MCF 10A (cell line): ENCODE measurements at regions of chr13 and their contacts with region 1.

Region 1: DNA sequence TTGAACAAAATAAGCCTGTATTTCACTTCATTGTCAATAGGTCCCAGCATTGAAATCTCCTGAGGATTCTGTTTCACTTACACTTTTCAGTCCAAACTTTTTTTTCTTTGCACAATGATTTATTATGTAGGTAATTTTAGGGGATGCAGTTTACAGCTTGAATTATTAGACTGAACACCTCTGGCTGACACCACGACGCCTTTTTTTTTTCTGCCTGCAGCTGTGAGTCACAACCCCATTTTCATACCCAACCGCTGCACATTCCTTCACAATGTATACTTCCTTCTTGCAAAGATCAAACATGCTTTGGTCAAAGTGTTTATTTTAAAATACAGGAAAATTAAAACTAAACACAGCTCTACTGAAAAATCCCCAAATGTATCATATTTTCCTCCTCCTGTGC is 11.4 kb downstream of the ZIC2 start:
- DNase-seq: peak; percentile 61
- H3K4me3 Mint-ChIP-seq: no peak overlapping the region
- H3K27ac Mint-ChIP-seq: no peak overlapping the region
- H3K4me1 Mint-ChIP-seq: peaks cover 13% of the 10 kb centered on the region
- H3K27me3 Mint-ChIP-seq: peaks cover 38% of the 10 kb centered on the region
- CTCF ChIP-seq: no peak

Region 2: GRCh38 chr13:99980201-99980823 is 12.6 kb before region 1 on chr13:
- CTCF ChIA-PET with region 1: no interaction called
- POLR2A ChIA-PET with region 1: interaction called, 16 read pairs
- intact Hi-C with region 1: no loop called
- DNase-seq: peak; percentile 81
- H3K4me3 Mint-ChIP-seq: peak overlapping the region; percentile 73
- H3K27ac Mint-ChIP-seq: no peak overlapping the region
- H3K4me1 Mint-ChIP-seq: peaks cover 4% of the 10 kb centered on the region
- H3K27me3 Mint-ChIP-seq: no peaks in the 10 kb centered on the region
- CTCF ChIP-seq: no peak